Right cardiac atrium (tissue), 5 donors: ENCODE measurements at regions of chr15 and their contacts with region 1.

Region 1: GRCh38 chr15:70763120-70763878 is at the start of gene UACA:
- DNase-seq: peak; percentile 95 to 98 (median 98)
- ATAC-seq: peak; percentile 98
- H3K4me3 ChIP-seq: peak within 1 kb of the TSS; percentile 80
- H3K27ac ChIP-seq: peak within 1 kb of the TSS; percentile 92
- H3K4me1 ChIP-seq: peaks cover 2% of the 10 kb centered on the region
- H3K27me3 ChIP-seq: no peaks in the 10 kb centered on the region
- total RNA-seq, gene UACA: 29.7 to 61.6 (median 48.5) TPM

Region 2: DNA sequence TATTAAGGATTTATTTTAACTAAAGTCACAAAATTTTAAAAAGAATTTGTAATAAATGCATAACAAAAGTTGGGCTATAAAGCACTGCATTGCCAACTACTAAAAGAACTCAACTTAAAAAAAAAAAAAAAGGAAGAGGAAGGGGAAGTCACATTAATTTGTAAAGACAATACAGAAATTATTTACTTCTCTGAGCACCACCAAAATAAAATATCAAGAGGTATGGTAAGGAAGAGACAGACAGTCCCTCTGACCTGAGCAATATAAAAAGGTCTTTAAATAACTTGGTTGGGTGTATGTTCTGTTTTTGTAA is 83.4 kb before region 1 on chr15:
- intact Hi-C with region 1: loop called in 1 of 4 experiments (anchors 10 kb)
- DNase-seq: no peak
- ATAC-seq: no peak
- H3K4me3 ChIP-seq: no peak overlapping the region
- H3K27ac ChIP-seq: no peak overlapping the region
- H3K4me1 ChIP-seq: no peaks in the 10 kb centered on the region
- H3K27me3 ChIP-seq: no peaks in the 10 kb centered on the region

Region 3: GRCh38 chr15:70690491-70691257 is 72.6 kb before region 1 on chr15:
- intact Hi-C with region 1: loop called in 2 of 4 experiments (anchors 10 kb)
- DNase-seq: no peak
- ATAC-seq: no peak
- H3K4me3 ChIP-seq: no peak overlapping the region
- H3K27ac ChIP-seq: no peak overlapping the region
- H3K4me1 ChIP-seq: no peaks in the 10 kb centered on the region
- H3K27me3 ChIP-seq: no peaks in the 10 kb centered on the region

Region 4: GRCh38 chr15:70701891-70702568 is 61.3 kb before region 1 on chr15:
- intact Hi-C with region 1: loop called in 2 of 4 experiments (anchors 10 kb)
- DNase-seq: peak in 1 of 3 donors; percentile 47
- ATAC-seq: peak; percentile 68 to 82
- H3K4me3 ChIP-seq: peak overlapping the region; percentile 38
- H3K27ac ChIP-seq: peak overlapping the region; percentile 84
- H3K4me1 ChIP-seq: peaks cover 9% of the 10 kb centered on the region
- H3K27me3 ChIP-seq: no peaks in the 10 kb centered on the region

Region 5: DNA sequence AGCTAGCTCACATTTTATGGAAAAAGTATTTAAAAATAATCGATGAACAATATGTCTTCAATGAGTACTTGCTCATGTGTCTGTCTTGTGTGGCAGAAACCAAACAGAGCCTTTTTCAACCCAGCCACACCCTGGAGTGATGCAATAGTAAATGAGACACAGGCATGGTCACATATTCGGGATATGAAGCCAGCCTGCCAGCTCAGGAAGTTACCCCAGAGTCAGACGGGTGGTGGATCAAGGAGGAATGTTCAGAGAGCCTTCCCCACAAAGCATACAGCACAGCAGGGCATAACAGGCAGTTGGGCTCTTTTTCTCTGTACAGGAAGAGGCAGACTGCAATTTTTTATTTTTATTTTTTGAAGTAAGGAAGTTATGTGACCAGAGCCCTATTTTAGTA is 63.3 kb after region 1 on chr15:
- intact Hi-C with region 1: loop called in 1 of 4 experiments (anchors 10 kb)
- DNase-seq: peak in 2 of 3 donors; percentile 66 to 79
- ATAC-seq: peak; percentile 83 to 87
- H3K4me3 ChIP-seq: no peak overlapping the region
- H3K27ac ChIP-seq: no peak overlapping the region
- H3K4me1 ChIP-seq: no peaks in the 10 kb centered on the region
- H3K27me3 ChIP-seq: no peaks in the 10 kb centered on the region